Psoas muscle (tissue), 8 donors: ENCODE measurements at regions of chr11 and their contacts with region 1.

Region 1: GRCh38 chr11:3854977-3855807 is at the start of gene STIM1:
- DNase-seq: peak; percentile 96 to 98
- ATAC-seq: peak; percentile 73 to 83 (median 82)
- H3K4me3 ChIP-seq: peak within 1 kb of the TSS; percentile 90
- H3K27ac ChIP-seq: peak within 1 kb of the TSS; percentile 99
- H3K4me1 ChIP-seq: peaks cover 51% of the 10 kb centered on the region
- H3K27me3 ChIP-seq: no peaks in the 10 kb centered on the region
- CTCF ChIP-seq: peak; percentile 98
- total RNA-seq, gene STIM1: 97.5 to 147 (median 112) TPM

Region 2: DNA sequence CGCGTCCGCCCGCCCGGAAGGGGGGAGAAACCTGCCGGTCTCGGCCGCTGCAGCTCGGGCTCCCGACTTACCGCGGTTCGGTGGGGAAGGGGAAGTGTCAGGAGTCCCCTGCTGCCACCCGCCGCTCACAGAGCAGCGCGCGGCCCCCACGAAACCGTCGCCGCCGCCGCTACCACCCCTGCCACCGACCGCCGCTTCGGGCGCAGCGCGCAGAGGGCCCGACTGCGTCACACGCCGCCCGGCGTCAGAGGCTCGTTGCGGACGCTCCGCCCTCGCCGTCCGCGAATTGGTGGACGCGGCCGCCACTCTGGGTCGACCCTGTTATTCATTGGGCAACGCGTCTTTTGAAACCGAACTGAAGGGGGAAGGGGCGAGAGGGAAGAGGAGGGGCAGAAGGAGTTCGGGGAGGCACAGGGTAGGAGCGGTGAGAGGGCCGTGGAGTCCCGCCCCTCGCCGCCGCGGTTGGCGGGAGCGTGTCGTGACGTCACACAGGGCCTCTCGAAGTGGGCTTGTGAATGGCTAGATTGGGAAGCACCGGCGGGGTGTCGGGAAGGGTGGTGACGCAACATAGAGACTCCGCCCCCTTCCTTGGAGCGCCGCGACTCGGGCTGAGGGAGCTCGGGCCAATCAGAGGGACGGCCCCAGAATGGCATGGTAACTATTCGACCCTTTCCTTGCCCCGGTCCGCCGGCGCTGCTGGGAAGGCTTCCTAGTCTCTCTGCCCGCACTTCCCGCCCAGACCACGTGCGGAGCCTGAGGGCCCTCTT is 57.7 kb before region 1 on chr11 and contains the start of gene NUP98:
- intact Hi-C with region 1: no loop called
- DNase-seq: peak; percentile 100
- ATAC-seq: peak; percentile 93 to 95 (median 94)
- H3K4me3 ChIP-seq: peak within 1 kb of the TSS; percentile 90
- H3K27ac ChIP-seq: peak within 1 kb of the TSS; percentile 95
- H3K4me1 ChIP-seq: peaks cover 3% of the 10 kb centered on the region
- H3K27me3 ChIP-seq: no peaks in the 10 kb centered on the region
- CTCF ChIP-seq: no peak
- total RNA-seq, gene NUP98: 45.3 to 85.1 (median 72.3) TPM

Region 3: GRCh38 chr11:3905080-3905953 is 50.1 kb after region 1 on chr11:
- intact Hi-C with region 1: loop called (anchors 5 kb)
- DNase-seq: no peak
- ATAC-seq: peak; percentile 43 to 76 (median 73)
- H3K4me3 ChIP-seq: no peak overlapping the region
- H3K27ac ChIP-seq: peak overlapping the region; percentile 85
- H3K4me1 ChIP-seq: peaks cover 79% of the 10 kb centered on the region
- H3K27me3 ChIP-seq: no peaks in the 10 kb centered on the region
- CTCF ChIP-seq: no peak

Region 4: DNA sequence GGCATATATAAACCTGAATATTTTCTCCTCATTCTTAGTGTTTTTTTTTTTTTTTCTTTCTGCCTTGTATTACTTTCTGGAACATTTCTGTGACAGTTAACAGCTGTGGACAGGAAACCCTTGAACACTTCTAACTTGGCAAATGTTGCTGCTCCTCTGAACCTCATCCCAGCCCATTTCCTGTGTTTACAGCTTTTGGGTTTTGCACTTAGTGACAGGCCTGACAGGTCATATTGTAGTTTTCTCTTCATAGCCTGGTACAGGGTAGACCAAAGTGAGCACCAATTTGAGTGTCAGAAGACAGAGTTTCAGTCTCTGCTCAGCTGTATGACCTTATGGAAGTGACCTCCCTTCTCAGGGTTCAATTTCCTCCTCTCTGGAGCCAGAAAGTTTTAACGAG is 91.9 kb after region 1 on chr11:
- intact Hi-C with region 1: loop called (anchors 5 kb)
- DNase-seq: no peak
- ATAC-seq: peak in 3 of 4 donors; percentile 38 to 62 (median 42)
- H3K4me3 ChIP-seq: no peak overlapping the region
- H3K27ac ChIP-seq: peak overlapping the region; percentile 79
- H3K4me1 ChIP-seq: peaks cover 87% of the 10 kb centered on the region
- H3K27me3 ChIP-seq: no peaks in the 10 kb centered on the region
- CTCF ChIP-seq: no peak

Region 5: DNA sequence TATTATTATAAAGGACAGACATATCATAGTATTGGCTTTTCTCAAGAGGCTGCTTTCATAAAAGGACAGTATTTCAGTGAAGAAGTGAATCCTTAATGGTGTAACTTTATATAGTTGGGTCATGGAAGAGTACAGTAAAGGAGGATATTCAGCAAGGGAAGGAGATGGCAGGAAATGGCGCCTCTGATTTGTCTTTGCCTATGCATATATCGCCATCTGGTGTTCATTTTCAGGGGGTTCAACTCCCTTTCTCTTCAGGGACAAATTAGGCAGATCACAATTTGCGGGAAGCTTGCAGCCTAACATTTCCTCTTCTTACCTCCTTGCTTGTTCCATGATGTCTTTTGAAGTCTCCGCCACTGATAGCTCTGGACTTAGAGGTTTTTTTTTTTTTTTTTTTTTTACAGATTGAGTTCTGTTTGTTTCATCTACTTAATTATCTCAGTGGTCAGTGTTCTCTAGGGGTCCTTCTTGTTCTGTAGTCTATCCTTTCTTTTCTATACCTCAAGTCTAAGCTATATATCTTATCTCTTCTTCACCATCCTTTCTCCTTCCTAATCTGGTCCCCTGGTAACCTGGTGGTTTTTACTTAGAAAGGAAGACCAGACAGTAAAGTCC is 217.6 kb after region 1 on chr11:
- intact Hi-C with region 1: loop called in 1 of 2 experiments (anchors 2 kb)
- DNase-seq: no peak
- ATAC-seq: peak; percentile 72 to 84 (median 76)
- H3K4me3 ChIP-seq: no peak overlapping the region
- H3K27ac ChIP-seq: peak overlapping the region; percentile 63
- H3K4me1 ChIP-seq: peaks cover 32% of the 10 kb centered on the region
- H3K27me3 ChIP-seq: no peaks in the 10 kb centered on the region
- CTCF ChIP-seq: peak; percentile 86